AG04449 (cell line): ENCODE measurements at regions of chr6 and their contacts with region 1.

Region 1: GRCh38 chr6:36615018-36615761 is 21.0 kb downstream of the SRSF3 start:
- DNase-seq: no peak
- H3K4me3 ChIP-seq: no peak overlapping the region
- CTCF ChIP-seq: peak; percentile 61

Region 2: DNA sequence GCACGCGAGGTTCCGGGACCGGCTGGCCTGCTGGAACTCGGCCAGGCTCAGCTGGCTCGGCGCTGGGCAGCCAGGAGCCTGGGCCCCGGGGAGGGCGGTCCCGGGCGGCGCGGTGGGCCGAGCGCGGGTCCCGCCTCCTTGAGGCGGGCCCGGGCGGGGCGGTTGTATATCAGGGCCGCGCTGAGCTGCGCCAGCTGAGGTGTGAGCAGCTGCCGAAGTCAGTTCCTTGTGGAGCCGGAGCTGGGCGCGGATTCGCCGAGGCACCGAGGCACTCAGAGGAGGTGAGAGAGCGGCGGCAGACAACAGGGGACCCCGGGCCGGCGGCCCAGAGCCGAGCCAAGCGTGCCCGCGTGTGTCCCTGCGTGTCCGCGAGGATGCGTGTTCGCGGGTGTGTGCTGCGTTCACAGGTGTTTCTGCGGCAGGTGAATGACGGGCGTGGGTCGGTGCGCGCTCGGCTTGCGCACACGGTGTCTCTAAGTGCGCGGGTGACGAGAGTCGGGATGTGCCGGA is 63.4 kb after region 1 on chr6 and contains the start of gene CDKN1A:
- CTCF ChIA-PET with region 1: interaction called, 66 read pairs
- POLR2A ChIA-PET with region 1: interaction called, 12 read pairs
- DNase-seq: no peak
- H3K4me3 ChIP-seq: peak within 1 kb of the TSS; percentile 91
- CTCF ChIP-seq: no peak

Region 3: GRCh38 chr6:36724514-36725390 is 109.6 kb after region 1 on chr6:
- CTCF ChIA-PET with region 1: interaction called, 179 read pairs
- POLR2A ChIA-PET with region 1: no interaction called
- DNase-seq: no peak
- H3K4me3 ChIP-seq: no peak overlapping the region
- CTCF ChIP-seq: peak; percentile 52

Region 4: DNA sequence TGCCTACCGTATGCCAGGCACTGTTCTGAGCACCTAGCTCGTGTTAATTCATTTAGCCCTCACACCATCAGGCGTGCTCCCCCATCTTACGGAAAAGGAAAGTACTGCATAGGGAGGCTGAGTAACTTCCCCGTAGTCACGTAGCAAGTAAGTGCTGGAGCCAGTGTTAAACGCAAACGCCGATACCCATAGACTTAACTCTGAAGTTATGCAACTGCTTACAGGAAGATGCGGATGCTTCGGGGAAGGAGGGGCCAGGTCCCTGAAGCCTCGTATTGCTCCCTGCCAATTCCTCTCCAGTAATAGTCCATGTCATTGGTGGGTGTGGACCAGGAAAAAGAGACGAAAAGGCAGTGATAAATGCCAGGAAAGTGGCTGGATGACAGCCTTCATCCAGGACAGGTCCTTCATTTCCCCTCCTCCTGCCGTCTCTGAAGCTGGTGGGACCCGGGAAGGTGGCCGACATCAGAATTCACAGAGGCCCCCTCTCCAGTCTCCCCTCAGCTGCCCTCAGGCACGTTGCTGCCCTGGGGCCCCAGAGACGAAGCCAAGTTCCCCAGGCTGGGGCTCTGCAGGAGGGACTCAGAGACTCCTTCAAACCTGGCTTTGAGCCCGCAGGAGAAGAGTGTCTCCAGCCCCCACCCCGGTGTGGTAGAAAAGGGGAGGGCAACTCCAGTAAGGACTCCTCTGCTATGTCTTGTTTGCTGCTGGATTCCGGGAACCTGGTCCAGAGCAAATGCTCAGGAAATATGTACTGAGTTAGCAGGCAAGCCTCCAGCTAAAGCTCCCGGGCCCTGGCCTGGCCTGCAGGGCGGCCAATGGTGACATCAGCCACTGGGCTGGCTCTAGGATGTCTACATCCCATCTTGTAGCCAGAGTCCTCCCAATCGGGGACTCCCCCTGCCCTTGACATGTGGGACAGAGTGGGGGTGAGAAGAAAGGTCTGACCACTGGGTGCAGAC is 120.2 kb after region 1 on chr6:
- CTCF ChIA-PET with region 1: interaction called, 179 read pairs
- POLR2A ChIA-PET with region 1: no interaction called
- DNase-seq: peak; percentile 91
- H3K4me3 ChIP-seq: peak overlapping the region; percentile 42
- CTCF ChIP-seq: peak; percentile 23

Region 5: GRCh38 chr6:36752886-36753506 is 137.8 kb after region 1 on chr6:
- CTCF ChIA-PET with region 1: interaction called, 167 read pairs
- POLR2A ChIA-PET with region 1: no interaction called
- DNase-seq: no peak
- H3K4me3 ChIP-seq: no peak overlapping the region
- CTCF ChIP-seq: no peak

Region 6: DNA sequence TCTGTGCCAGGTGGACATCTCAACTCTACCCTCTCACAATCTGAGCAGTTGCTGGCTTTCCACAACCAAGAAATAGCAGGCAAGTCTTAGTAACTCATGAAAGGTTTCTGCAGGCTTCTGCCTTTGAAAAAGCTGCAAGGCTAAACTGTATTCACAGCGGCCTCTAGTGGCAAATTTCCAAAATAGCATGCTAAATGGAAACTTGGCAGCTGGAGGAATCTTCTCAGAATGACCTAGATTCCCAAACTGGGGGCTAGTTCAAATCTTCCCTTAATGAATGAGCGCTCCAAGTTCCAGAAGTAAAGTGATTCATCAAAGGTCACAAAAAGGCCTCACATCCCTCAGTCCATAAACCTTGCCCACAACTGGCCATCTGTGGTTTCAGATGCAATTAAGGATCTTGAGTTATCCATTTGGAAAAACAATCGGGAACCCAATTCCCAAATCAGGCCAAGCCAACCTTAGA is 236.0 kb after region 1 on chr6:
- CTCF ChIA-PET with region 1: interaction called, 10 read pairs
- POLR2A ChIA-PET with region 1: no interaction called
- DNase-seq: peak; percentile 14
- H3K4me3 ChIP-seq: no peak overlapping the region
- CTCF ChIP-seq: peak; percentile 67